Heart right ventricle (tissue), 16 donors: ENCODE measurements at regions of chr1 and their contacts with region 1.

Region 1: DNA sequence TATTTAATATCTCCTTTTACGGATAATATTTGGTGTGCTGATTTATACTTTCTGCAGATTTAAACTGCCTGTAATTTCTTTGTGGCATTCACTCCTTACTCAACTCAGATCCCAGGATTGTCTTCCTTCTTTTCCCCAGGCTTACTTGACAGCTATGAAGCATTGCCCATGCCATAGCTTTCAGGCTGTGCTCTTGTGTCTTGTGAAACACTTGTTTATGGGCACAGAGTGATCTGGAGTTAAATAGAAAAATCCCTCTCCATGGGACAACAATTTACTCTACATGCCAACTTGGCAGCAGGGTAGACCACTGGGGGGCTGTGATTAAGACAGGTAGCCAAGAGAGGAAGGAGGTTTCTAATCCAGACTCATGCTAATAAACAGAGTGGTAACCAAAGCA is 57.4 kb downstream of the PPP1R12B start:
- DNase-seq: no peak
- ATAC-seq: peak in 3 of 8 donors; percentile 21 to 79 (median 45)
- H3K4me3 ChIP-seq: no peak overlapping the region
- H3K27ac ChIP-seq: peak overlapping the region in 8 of 10 donors; percentile 3 to 65 (median 36)
- H3K4me1 ChIP-seq: peaks cover 0 to 77% (median 46%) of the 10 kb centered on the region in 9 donors
- H3K27me3 ChIP-seq: no peaks in the 10 kb centered on the region
- CTCF ChIP-seq: no peak

Region 2: DNA sequence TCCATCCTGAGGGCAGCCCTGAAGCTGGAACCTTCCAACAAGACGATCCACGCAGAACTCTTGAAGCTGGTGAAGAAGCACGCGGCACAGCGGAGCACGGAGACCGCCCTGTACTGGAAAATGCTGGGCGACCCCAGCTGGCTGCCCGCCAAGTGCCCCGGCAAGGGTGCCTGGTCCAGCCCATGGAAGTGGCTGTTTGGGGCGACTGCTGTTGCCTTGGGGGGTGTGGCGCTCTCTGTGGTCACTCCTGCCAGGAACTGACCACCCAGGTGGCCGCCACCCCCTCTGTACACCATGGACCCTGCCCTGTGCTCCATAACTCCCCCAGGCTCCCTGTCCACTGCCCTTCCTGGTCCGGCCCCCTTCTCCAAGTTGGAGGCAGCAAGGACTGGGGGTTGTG is 33.4 kb after region 1 on chr1:
- intact Hi-C with region 1: loop called in 1 of 10 experiments (anchors 2 kb)
- DNase-seq: no peak
- ATAC-seq: peak in 5 of 8 donors; percentile 13 to 54 (median 20)
- H3K4me3 ChIP-seq: no peak overlapping the region
- H3K27ac ChIP-seq: no peak overlapping the region
- H3K4me1 ChIP-seq: peaks cover 0 to 39% (median 11%) of the 10 kb centered on the region in 9 donors
- H3K27me3 ChIP-seq: no peaks in the 10 kb centered on the region
- CTCF ChIP-seq: no peak